Ovary (tissue), 10 donors: ENCODE measurements at regions of chr6 and their contacts with region 1.

Region 1: GRCh38 chr6:29705389-29706231 is 17.6 kb upstream of the HLA-F start:
- DNase-seq: peak in 1 of 5 donors; percentile 48
- H3K4me3 ChIP-seq: no peak overlapping the region
- H3K27ac ChIP-seq: no peak overlapping the region
- H3K4me1 ChIP-seq: no peaks in the 10 kb centered on the region
- H3K27me3 ChIP-seq: no peaks in the 10 kb centered on the region
- CTCF ChIP-seq: peak in 2 of 3 donors; percentile 52 to 66
- EP300 ChIP-seq: no peak
- POLR2A ChIP-seq: no peak

Region 2: GRCh38 chr6:28673800-28674671 is 1031.6 kb before region 1 on chr6:
- intact Hi-C with region 1: no loop called
- DNase-seq: peak in 4 of 5 donors; percentile 33 to 66 (median 36)
- H3K4me3 ChIP-seq: no peak overlapping the region
- H3K27ac ChIP-seq: no peak overlapping the region
- H3K4me1 ChIP-seq: no peaks in the 10 kb centered on the region
- H3K27me3 ChIP-seq: no peaks in the 10 kb centered on the region
- CTCF ChIP-seq: no peak
- EP300 ChIP-seq: no peak
- POLR2A ChIP-seq: no peak

Region 3: GRCh38 chr6:29171736-29172135 is 533.9 kb before region 1 on chr6:
- intact Hi-C with region 1: no loop called
- DNase-seq: no peak
- H3K4me3 ChIP-seq: no peak overlapping the region
- H3K27ac ChIP-seq: no peak overlapping the region
- H3K4me1 ChIP-seq: no peaks in the 10 kb centered on the region
- H3K27me3 ChIP-seq: no peaks in the 10 kb centered on the region
- CTCF ChIP-seq: no peak
- EP300 ChIP-seq: no peak
- POLR2A ChIP-seq: no peak

Region 4: DNA sequence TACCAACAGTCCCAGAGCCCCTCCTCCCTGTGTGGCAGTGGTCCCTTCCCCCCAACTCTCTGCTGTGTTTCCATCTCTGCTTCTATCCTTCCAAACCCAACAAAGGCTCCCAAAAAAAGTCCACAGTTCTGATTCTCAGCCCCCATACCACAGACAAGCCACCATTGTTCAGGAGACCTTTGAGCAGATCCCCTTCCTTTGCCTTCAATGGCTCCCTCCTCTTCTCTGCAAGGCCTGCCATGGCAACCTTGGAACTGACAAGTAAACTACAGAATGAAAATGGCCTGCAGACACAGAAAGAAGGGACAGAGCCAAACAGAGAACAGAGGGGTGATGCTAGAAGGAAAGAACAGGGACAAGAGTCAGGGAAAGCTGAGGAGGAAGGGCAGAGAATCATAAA is 97.5 kb before region 1 on chr6:
- intact Hi-C with region 1: no loop called
- DNase-seq: no peak
- H3K4me3 ChIP-seq: no peak overlapping the region
- H3K27ac ChIP-seq: no peak overlapping the region
- H3K4me1 ChIP-seq: no peaks in the 10 kb centered on the region
- H3K27me3 ChIP-seq: no peaks in the 10 kb centered on the region
- CTCF ChIP-seq: no peak
- EP300 ChIP-seq: no peak
- POLR2A ChIP-seq: no peak

Region 5: GRCh38 chr6:29632789-29633533 is 72.6 kb before region 1 on chr6 and contains the start of gene GABBR1:
- intact Hi-C with region 1: no loop called
- DNase-seq: peak; percentile 85 to 90 (median 90)
- H3K4me3 ChIP-seq: peak within 1 kb of the TSS; percentile 79
- H3K27ac ChIP-seq: peak within 1 kb of the TSS; percentile 31 to 43
- H3K4me1 ChIP-seq: peaks cover 11% of the 10 kb centered on the region
- H3K27me3 ChIP-seq: no peaks in the 10 kb centered on the region
- CTCF ChIP-seq: no peak
- EP300 ChIP-seq: no peak
- POLR2A ChIP-seq: peak; percentile 39
- total RNA-seq, gene GABBR1: 23.0 to 80.0 (median 58.0) TPM

Region 6: GRCh38 chr6:29752451-29753308 is 47.1 kb after region 1 on chr6:
- intact Hi-C with region 1: loop called in 2 of 4 experiments (anchors 5 to 10 kb)
- DNase-seq: peak; percentile 80 to 91 (median 88)
- H3K4me3 ChIP-seq: peak overlapping the region; percentile 57
- H3K27ac ChIP-seq: peak overlapping the region; percentile 78 to 91
- H3K4me1 ChIP-seq: peaks cover 1% of the 10 kb centered on the region
- H3K27me3 ChIP-seq: no peaks in the 10 kb centered on the region
- CTCF ChIP-seq: peak; percentile 85 to 97 (median 95)
- EP300 ChIP-seq: no peak
- POLR2A ChIP-seq: peak; percentile 38

Region 7: DNA sequence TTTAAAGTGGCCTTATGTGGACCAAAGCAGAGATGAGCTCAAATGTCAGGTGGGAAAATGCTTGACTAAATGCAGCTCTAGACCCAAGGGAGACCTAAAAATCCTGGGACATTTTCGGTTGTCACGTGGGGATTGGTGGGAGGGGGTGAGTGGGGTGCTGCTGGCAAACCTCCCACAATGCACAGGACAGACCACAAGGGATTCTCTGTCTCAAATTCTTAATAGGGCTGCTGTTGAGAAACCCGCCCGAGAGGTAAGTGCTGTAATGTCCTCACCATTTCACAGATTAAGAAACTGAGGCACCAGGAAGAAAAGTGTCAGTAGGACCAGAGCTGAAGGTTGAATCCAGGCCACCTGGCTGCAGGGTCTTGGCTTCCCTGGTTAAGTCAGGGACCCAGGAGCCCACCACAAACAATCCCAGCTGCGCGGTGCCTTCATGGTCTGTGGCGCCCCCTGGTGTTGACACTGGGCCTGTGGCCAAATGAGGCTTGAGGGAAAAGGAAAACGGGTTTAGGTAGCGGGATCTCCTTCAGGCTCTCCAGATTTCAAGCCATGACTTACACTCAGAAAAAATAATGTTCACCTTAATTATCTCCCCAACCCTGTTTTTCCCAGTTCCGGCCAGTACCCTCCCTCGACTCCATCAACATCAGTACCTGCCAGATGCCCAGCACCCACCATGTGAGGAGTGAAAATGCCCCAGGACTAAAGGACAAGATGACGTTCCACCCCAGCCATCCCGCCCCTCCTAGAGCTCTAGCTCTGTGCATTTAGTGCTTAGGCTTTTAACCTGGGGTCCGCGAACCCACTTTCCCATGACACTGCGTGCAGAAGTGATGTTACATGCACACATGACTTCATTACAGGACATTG is 129.2 kb after region 1 on chr6:
- intact Hi-C with region 1: loop called in 3 of 4 experiments (anchors 10 kb)
- DNase-seq: no peak
- H3K4me3 ChIP-seq: no peak overlapping the region
- H3K27ac ChIP-seq: no peak overlapping the region
- H3K4me1 ChIP-seq: no peaks in the 10 kb centered on the region
- H3K27me3 ChIP-seq: no peaks in the 10 kb centered on the region
- CTCF ChIP-seq: peak in 1 of 3 donors; percentile 30
- EP300 ChIP-seq: no peak
- POLR2A ChIP-seq: no peak